Naive thymus-derived CD4-positive, alpha-beta T cell (primary cell): ENCODE measurements at regions of chr5 and their contacts with region 1.

Region 1: DNA sequence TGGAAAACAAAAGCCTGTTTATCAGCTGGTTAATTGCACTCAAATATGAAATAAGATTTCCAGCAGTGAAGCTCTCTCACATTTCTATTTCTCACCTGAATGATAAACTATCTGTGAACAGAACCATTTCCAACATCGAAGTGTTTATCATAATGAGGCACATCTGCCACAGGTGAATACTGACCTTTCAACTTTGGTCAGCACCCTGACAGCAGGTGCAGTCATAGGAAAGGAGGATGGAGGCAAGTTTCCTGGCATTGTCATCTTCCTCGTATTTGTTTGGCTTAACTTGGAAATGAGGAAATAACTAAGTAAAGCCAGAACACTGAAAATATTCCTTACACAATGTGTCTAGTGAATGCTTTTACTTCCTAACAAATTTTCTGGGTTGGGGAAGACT is 716.4 kb downstream of the NR2F1-AS1 start:
- DNase-seq: no peak
- ATAC-seq: no peak
- H3K4me3 ChIP-seq: no peak overlapping the region
- H3K4me3 Mint-ChIP-seq: no peak overlapping the region
- H3K27ac ChIP-seq: no peak overlapping the region
- H3K27ac Mint-ChIP-seq: no peak overlapping the region
- H3K4me1 ChIP-seq: no peaks in the 10 kb centered on the region
- H3K4me1 Mint-ChIP-seq: no peaks in the 10 kb centered on the region
- H3K27me3 ChIP-seq: no peaks in the 10 kb centered on the region
- H3K27me3 Mint-ChIP-seq: no peaks in the 10 kb centered on the region

Region 2: GRCh38 chr5:91541696-91542095 is 1322.9 kb before region 1 on chr5:
- CTCF ChIA-PET with region 1: no interaction called
- POLR2A ChIA-PET with region 1: no interaction called
- intact Hi-C with region 1: no loop called
- DNase-seq: no peak
- ATAC-seq: no peak
- H3K4me3 ChIP-seq: no peak overlapping the region
- H3K4me3 Mint-ChIP-seq: no peak overlapping the region
- H3K27ac ChIP-seq: no peak overlapping the region
- H3K27ac Mint-ChIP-seq: no peak overlapping the region
- H3K4me1 ChIP-seq: no peaks in the 10 kb centered on the region
- H3K4me1 Mint-ChIP-seq: peaks cover 0 to 9% (median 3%) of the 10 kb centered on the region in 7 donors
- H3K27me3 ChIP-seq: no peaks in the 10 kb centered on the region
- H3K27me3 Mint-ChIP-seq: no peaks in the 10 kb centered on the region

Region 3: GRCh38 chr5:92899611-92900010 is 35.0 kb after region 1 on chr5:
- CTCF ChIA-PET with region 1: no interaction called
- POLR2A ChIA-PET with region 1: no interaction called
- intact Hi-C with region 1: loop called in 1 of 2 experiments (anchors 2 kb)
- DNase-seq: no peak
- ATAC-seq: no peak
- H3K4me3 ChIP-seq: no peak overlapping the region
- H3K4me3 Mint-ChIP-seq: no peak overlapping the region
- H3K27ac ChIP-seq: no peak overlapping the region
- H3K27ac Mint-ChIP-seq: no peak overlapping the region
- H3K4me1 ChIP-seq: no peaks in the 10 kb centered on the region
- H3K4me1 Mint-ChIP-seq: no peaks in the 10 kb centered on the region
- H3K27me3 ChIP-seq: no peaks in the 10 kb centered on the region
- H3K27me3 Mint-ChIP-seq: no peaks in the 10 kb centered on the region